ENCODE measurements at regions of chr19 and their contacts with region 1.

Region 1: DNA sequence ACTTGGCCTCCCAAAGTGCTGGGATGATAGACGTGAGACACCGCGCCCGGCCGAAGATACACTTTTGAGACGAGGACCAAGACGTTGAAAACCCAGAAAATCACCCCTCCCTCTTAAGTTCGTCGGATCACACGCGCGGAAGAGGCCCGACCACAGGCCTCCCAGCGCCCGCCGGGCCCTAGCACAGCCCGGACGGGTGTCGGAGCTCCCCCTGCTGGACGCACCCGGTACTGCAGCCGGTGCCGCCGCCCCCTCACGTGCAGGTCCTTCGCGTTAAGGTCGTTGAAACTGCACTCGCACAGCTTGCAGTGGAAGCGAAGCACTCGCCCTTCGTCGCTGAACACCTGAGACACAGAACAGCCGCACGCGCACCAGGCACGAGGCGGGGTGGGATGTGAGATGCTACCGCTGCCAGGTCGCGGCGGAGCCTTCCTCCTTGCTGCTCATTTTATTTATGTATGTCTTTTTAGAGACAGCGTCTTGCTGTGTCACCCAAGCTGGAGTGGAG is 35.7 kb upstream of the MATK start:
- DNase-seq: peak; percentile 93
- ATAC-seq: peak; percentile 86
- H3K4me3 Mint-ChIP-seq: no peak overlapping the region
- H3K27ac Mint-ChIP-seq: no peak overlapping the region
- H3K4me1 Mint-ChIP-seq: no peaks in the 10 kb centered on the region
- H3K27me3 Mint-ChIP-seq: peaks cover 5% of the 10 kb centered on the region; the same call in 1 of the 2 replicates
- CTCF ChIP-seq: peak; percentile 100

Region 2: GRCh38 chr19:3721131-3721886 is 100.6 kb before region 1 on chr19:
- CTCF ChIA-PET with region 1: interaction called, 19 read pairs
- POLR2A ChIA-PET with region 1: no interaction called
- DNase-seq: peak; percentile 99
- ATAC-seq: peak; percentile 69
- H3K4me3 Mint-ChIP-seq: peak overlapping the region; percentile 83
- H3K27ac Mint-ChIP-seq: no peak overlapping the region
- H3K4me1 Mint-ChIP-seq: peaks cover 16% of the 10 kb centered on the region
- H3K27me3 Mint-ChIP-seq: no peaks in the 10 kb centered on the region
- CTCF ChIP-seq: no peak

Region 3: DNA sequence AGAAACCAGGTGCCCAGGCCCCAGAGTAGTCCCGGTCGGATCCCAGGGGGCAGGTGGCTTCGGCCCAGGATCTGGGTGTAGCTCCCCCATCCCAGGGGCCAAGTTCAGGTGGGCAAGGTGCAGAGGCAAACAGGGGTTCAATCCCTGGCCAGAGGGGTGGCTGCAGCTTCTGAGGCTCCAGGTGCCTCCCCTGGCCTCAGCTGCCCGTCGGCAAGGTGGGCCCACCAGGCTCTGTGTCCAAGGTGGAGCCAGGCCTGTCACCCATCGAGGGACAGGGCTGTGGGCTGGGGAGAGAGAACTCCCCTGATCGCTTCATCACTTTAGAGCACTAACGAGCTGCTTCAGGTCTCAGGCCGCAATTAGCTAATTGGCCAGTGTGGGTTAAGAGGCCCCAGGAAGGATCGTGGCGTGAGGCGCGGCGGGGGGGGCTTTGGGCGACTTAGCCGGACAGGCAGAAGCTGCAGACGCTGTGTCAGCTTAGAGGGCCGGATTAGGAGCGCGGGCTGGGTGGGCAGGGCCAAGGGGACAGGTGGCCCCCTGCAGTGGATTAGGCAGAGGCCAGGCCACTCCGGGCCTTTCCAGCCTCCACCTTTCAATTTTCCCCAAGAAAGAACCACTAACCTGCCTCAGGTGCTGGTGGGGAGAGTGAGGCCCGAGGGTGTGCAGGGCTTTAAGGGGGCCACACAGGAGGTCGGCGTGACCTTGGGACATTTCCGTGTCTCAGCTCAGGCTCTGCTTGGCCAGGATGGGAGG is 47.1 kb before region 1 on chr19:
- CTCF ChIA-PET with region 1: interaction called, 10 read pairs
- POLR2A ChIA-PET with region 1: no interaction called
- DNase-seq: no peak
- ATAC-seq: no peak
- H3K4me3 Mint-ChIP-seq: no peak overlapping the region
- H3K27ac Mint-ChIP-seq: peak overlapping the region; percentile 63; the same call in 1 of the 2 replicates
- H3K4me1 Mint-ChIP-seq: peaks cover 5% of the 10 kb centered on the region
- H3K27me3 Mint-ChIP-seq: no peaks in the 10 kb centered on the region
- CTCF ChIP-seq: no peak

Region 4: GRCh38 chr19:3788996-3789778 is 32.7 kb before region 1 on chr19:
- CTCF ChIA-PET with region 1: interaction called, 16 read pairs
- POLR2A ChIA-PET with region 1: no interaction called
- DNase-seq: no peak
- ATAC-seq: no peak
- H3K4me3 Mint-ChIP-seq: no peak overlapping the region
- H3K27ac Mint-ChIP-seq: no peak overlapping the region
- H3K4me1 Mint-ChIP-seq: peaks cover 7% of the 10 kb centered on the region
- H3K27me3 Mint-ChIP-seq: peaks cover 28% of the 10 kb centered on the region
- CTCF ChIP-seq: no peak

Region 5: DNA sequence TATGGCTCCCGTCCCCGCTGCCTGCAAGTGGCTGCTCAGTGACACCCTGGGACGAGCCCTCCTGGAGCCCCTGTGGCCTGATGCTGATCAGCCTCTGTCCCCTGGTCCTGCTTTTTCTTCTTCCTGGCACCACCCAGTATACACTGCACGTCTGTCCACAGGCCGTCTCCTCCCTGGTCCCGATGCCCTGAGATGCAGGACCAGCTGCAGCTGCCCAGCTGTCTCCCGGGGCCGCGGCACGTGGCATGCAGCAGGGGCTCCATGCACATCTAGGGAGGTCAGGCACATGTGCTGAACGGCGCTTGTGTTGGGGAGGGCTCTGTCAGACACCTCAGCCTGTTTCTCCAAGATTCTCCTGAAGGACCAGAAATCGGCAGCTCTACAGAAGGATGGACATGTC is 16.8 kb after region 1 on chr19:
- CTCF ChIA-PET with region 1: interaction called, 19 read pairs
- POLR2A ChIA-PET with region 1: no interaction called
- DNase-seq: no peak
- ATAC-seq: no peak
- H3K4me3 Mint-ChIP-seq: no peak overlapping the region
- H3K27ac Mint-ChIP-seq: no peak overlapping the region
- H3K4me1 Mint-ChIP-seq: no peaks in the 10 kb centered on the region
- H3K27me3 Mint-ChIP-seq: peaks cover 8% of the 10 kb centered on the region
- CTCF ChIP-seq: no peak

Region 6: DNA sequence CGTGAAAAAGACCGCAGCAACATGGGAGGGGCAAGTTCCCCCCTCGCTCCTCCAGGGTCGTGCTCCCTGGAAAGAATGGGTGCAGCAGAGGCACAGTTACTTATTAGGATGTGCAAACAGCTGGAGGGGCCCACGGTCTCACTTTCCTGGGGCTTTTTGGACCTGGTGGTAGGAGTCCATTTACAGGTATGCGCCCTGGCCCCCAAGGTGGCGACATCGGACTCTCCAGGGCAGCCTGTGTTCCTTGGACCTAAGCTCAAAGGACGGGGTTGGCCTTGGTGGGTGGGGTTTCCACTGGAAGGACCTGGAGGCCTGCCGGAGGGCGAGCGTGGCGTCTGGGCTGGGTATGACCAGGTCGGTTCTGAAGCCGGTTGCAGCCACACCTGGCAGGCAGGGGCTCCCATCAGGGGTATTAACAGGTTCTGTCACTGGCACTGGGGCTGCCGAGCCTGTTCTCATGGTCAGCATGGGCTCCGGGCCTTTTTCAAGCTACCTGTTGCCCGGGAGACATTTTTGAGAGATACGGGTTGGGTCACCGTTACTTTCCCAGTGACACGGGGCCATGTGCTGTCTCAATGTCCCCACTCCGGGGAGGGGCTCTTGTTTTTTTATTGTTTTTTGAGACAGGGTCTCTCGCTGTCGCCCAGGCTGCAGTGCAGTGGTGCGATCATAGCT is 41.1 kb after region 1 on chr19:
- CTCF ChIA-PET with region 1: interaction called, 10 read pairs
- POLR2A ChIA-PET with region 1: no interaction called
- DNase-seq: peak; percentile 18
- ATAC-seq: peak; percentile 38
- H3K4me3 Mint-ChIP-seq: no peak overlapping the region
- H3K27ac Mint-ChIP-seq: no peak overlapping the region
- H3K4me1 Mint-ChIP-seq: peaks cover 11% of the 10 kb centered on the region
- H3K27me3 Mint-ChIP-seq: peaks cover 6% of the 10 kb centered on the region
- CTCF ChIP-seq: no peak

Region 7: DNA sequence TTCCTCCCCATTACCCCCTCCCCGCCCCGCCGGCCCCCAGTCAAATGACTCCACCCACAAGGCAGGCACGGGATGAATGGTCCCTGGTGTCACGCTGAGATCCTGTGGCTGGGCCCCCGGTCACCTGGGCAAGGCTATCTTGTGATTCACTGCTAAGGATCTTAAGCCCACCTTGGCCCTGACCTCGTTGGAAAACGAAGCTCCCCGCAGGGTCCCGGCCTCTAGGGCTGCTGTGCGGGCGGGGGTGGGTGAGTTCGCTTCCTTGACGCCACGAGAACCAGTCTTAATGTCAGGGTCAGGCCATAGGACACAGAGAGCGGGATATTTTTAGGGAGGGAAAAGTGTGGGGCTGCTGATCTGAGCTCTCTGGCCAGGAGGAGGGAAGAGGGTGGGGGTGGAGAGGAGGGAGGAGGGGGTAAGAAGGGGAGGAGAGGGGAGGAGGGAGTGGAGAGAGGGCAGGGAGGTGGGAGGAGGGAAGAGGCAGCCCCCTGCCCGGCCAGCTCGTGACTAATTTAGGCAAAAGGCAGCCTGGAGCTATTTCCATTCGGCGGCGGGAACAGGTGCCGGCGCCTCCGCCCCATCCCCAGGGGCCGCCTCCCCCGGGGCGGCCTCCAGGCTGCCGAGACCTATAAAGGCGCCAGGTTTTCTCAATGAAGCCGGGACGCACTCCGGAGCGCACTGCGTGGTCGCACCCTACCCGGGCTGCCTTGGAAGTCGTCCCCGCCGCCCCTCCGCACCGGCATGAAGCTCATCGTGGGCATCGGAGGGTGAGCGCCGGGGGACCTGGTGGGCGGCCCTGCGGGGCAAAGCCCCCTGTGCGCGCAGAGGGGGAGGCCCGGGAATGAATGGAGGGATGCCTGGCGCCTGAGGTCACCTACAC is 111.3 kb after region 1 on chr19 and contains the start of gene NMRK2:
- CTCF ChIA-PET with region 1: interaction called, 17 read pairs
- POLR2A ChIA-PET with region 1: no interaction called
- DNase-seq: peak; percentile 78
- ATAC-seq: peak; percentile 80
- H3K4me3 Mint-ChIP-seq: peak within 1 kb of the TSS; percentile 80
- H3K27ac Mint-ChIP-seq: peak within 1 kb of the TSS; percentile 96
- H3K4me1 Mint-ChIP-seq: peaks cover 7% of the 10 kb centered on the region
- H3K27me3 Mint-ChIP-seq: no peaks in the 10 kb centered on the region
- CTCF ChIP-seq: no peak
- total RNA-seq, gene NMRK2: 50.4 to 61.9 TPM (median 51.1 TPM) in 3 replicates

Measured in WTC11 (cell line).